CD4-positive, alpha-beta memory T cell (primary cell): ENCODE measurements at regions of chr7 and their contacts with region 1.

Region 1: DNA sequence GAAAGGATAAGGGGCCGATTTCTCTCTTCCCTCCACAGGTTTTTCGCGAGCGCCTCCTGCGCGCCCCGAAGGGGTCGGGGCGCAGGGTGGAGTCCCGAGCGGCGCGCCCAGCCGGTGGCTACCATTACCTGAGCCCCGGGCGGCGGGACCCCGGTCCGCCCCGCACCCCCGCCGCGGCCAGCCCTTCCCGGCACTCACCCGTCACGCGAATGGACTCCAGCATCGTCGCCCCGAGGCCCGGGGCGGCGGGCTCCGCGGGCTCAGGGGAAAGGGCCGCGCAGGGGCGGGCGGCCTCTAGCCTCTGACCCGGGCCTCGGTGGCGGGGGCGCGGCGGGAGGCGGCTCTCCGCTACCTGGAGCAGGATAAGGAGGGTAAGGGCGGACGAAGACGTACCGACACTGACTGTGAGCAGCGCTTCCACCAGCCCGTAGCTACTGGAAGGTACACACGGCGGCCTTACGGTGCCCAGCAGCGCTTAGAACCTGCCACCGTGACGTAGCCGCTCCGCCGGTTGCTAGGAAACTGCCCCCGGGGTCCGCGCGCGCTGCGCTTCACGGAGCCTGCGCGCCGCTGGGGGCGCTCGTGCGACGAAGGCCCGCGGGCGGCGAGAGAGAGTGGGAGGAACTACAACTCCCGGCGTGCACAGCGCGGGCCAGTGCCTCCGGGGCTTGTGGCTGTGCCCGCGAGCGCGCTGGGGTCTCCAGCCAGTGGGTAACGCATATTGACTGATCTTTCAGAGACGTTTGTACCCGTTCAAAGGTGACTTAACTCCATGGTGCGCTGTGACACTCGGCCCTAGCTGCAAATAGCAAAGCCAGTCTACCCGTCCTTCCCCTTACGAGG is 22.7 kb upstream of the ANLN start:
- DNase-seq: peak; percentile 90 to 93 (median 92)
- H3K4me3 ChIP-seq: peak overlapping the region; percentile 67 to 100
- H3K4me3 Mint-ChIP-seq: peak overlapping the region; percentile 92 to 95 (median 94)
- H3K27ac ChIP-seq: peak overlapping the region; percentile 73
- H3K27ac Mint-ChIP-seq: peak overlapping the region; percentile 77 to 96 (median 91)
- H3K4me1 ChIP-seq: peaks cover 11% of the 10 kb centered on the region
- H3K4me1 Mint-ChIP-seq: peaks cover 0 to 12% (median 5%) of the 10 kb centered on the region in 4 donors
- H3K27me3 ChIP-seq: peaks cover 6% of the 10 kb centered on the region
- H3K27me3 Mint-ChIP-seq: peaks cover 8 to 9% of the 10 kb centered on the region in 2 donors

Region 2: DNA sequence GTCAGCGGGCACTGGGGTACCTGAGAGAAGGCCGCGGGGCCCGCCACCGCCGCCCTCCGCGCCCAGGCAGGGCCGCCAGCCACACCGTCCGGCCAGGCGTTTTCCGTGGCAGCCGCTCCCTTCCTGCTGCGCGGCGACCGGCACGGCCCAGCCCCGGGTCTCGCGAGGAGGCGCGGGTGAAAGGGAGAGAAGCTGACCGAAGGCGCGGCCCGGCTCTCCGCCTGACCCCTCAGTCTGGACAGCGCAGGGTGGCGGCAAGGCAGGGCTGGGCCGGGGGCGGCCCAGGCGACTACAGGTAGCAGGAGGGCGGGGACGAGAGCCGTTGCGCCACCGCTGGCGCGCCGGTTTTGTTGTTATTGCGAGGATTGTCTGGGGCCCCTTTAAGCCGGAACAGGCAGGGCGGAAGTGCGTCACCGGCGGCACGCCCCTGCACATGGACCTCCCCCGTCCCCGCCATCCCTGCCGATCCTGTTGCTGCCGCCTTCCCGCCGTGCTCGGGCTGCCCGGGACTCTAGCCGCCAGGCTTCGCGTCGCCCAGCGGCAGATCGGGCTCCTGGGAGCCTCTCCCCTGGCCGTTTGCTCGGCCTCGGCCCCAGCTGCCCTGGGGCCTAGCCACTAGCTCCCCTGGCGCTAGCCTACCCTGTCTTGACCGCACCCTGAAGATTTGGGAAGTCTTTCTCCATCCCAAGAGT is 672.0 kb before region 1 on chr7 and contains the start of gene HERPUD2:
- CTCF ChIA-PET with region 1: interaction called, 3 read pairs
- POLR2A ChIA-PET with region 1: interaction called, 4 read pairs
- intact Hi-C with region 1: loop called (anchors 10 kb)
- DNase-seq: peak; percentile 91 to 94 (median 93)
- H3K4me3 ChIP-seq: peak within 1 kb of the TSS; percentile 90 to 98
- H3K4me3 Mint-ChIP-seq: peak within 1 kb of the TSS; percentile 94 to 99 (median 98)
- H3K27ac ChIP-seq: peak within 1 kb of the TSS; percentile 93
- H3K27ac Mint-ChIP-seq: peak within 1 kb of the TSS; percentile 86 to 100 (median 98)
- H3K4me1 ChIP-seq: peaks cover 33% of the 10 kb centered on the region
- H3K4me1 Mint-ChIP-seq: peaks cover 23 to 67% (median 39%) of the 10 kb centered on the region in 4 donors
- H3K27me3 ChIP-seq: no peaks in the 10 kb centered on the region
- H3K27me3 Mint-ChIP-seq: no peaks in the 10 kb centered on the region
- total RNA-seq, gene HERPUD2: 67.3 to 71.8 TPM

Region 3: GRCh38 chr7:35856175-35856574 is 510.8 kb before region 1 on chr7:
- CTCF ChIA-PET with region 1: no interaction called
- POLR2A ChIA-PET with region 1: no interaction called
- intact Hi-C with region 1: no loop called
- DNase-seq: no peak
- H3K4me3 ChIP-seq: no peak overlapping the region
- H3K4me3 Mint-ChIP-seq: peak overlapping the region in 1 of 8 donors; percentile 32
- H3K27ac ChIP-seq: no peak overlapping the region
- H3K27ac Mint-ChIP-seq: no peak overlapping the region
- H3K4me1 ChIP-seq: peaks cover 19% of the 10 kb centered on the region
- H3K4me1 Mint-ChIP-seq: peaks cover 45 to 81% (median 70%) of the 10 kb centered on the region in 4 donors
- H3K27me3 ChIP-seq: no peaks in the 10 kb centered on the region
- H3K27me3 Mint-ChIP-seq: no peaks in the 10 kb centered on the region

Region 4: DNA sequence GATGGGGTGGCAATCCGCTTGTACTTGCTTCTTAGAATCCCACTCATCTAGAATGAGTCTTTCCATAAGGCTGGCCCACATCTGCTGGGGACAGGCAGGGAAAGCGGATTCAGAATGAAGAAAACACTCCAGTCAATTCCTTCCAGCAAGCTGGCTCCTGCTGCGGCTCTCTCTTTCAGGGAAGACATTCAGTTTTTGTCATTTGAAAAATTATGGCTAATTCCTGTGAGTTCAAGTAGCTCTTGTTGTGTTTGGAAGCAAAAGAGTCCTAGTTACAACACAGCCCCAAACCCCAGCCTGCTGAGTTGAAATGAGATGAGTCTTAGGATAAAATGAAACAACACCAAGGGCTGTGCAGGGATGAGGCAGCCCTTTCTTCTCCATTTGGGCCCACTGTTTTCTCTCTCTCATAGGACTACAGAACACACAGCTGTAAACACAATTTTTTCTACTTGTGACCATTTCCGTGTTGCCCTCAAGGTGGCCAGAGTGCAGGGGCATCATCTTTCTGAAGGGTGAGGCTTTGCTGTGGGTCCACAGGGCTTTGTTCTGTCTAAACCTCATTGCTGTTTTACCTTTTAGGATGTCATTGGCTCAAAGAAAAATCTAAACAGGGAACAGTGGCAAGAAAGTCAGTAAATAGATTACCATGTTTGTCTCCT is 304.7 kb before region 1 on chr7:
- CTCF ChIA-PET with region 1: no interaction called
- POLR2A ChIA-PET with region 1: no interaction called
- intact Hi-C with region 1: no loop called
- DNase-seq: no peak
- H3K4me3 ChIP-seq: no peak overlapping the region
- H3K4me3 Mint-ChIP-seq: no peak overlapping the region
- H3K27ac ChIP-seq: no peak overlapping the region
- H3K27ac Mint-ChIP-seq: no peak overlapping the region
- H3K4me1 ChIP-seq: no peaks in the 10 kb centered on the region
- H3K4me1 Mint-ChIP-seq: no peaks in the 10 kb centered on the region
- H3K27me3 ChIP-seq: no peaks in the 10 kb centered on the region
- H3K27me3 Mint-ChIP-seq: peaks cover 0 to 2% of the 10 kb centered on the region in 2 donors

Region 5: GRCh38 chr7:36315309-36316133 is 51.4 kb before region 1 on chr7:
- CTCF ChIA-PET with region 1: interaction called, 10 read pairs
- POLR2A ChIA-PET with region 1: no interaction called
- intact Hi-C with region 1: no loop called
- DNase-seq: no peak
- H3K4me3 ChIP-seq: no peak overlapping the region
- H3K4me3 Mint-ChIP-seq: no peak overlapping the region
- H3K27ac ChIP-seq: no peak overlapping the region
- H3K27ac Mint-ChIP-seq: no peak overlapping the region
- H3K4me1 ChIP-seq: peaks cover 3% of the 10 kb centered on the region
- H3K4me1 Mint-ChIP-seq: peaks cover 2 to 6% (median 5%) of the 10 kb centered on the region in 4 donors
- H3K27me3 ChIP-seq: no peaks in the 10 kb centered on the region
- H3K27me3 Mint-ChIP-seq: no peaks in the 10 kb centered on the region

Region 6: DNA sequence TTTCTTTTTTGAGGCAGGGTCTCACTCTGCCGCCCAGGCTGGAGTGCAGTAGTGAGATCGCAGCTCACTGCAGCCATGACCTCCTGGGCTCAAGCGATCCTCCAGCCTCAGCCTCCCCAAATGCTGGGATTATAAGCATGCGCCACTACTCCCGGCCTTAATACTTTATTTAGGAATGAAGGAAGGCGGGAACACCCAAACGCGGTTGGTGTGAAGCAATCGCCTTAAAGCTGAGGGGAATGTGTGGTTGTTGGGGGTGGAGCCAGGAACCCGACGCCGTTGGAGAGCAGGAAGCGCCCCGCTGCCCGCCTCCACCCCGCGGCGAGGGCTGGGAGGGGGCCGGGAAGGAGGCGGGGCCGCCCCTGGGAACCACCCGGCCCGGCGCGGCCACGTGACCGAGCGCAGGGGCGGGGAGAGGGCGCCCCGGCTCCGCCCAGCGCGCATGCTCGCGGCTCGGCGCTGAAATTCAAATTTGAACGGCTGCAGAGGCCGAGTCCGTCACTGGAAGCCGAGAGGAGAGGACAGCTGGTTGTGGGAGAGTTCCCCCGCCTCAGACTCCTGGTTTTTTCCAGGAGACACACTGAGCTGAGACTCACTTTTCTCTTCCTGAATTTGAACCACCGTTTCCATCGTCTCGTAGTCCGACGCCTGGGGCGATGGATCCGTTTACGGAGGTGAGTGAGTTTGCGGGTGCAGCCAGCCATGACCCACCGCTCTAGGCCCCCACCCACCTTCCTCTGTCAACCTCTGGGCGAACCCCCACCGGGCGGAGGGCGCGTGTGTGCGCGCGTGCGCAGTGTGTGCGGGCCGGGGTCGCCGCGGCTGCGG is 22.6 kb after region 1 on chr7 and contains the start of gene ANLN:
- CTCF ChIA-PET with region 1: interaction called, 24 read pairs
- POLR2A ChIA-PET with region 1: interaction called, 19 read pairs
- intact Hi-C with region 1: loop called (anchors 1 kb)
- DNase-seq: peak; percentile 80 to 86 (median 85)
- H3K4me3 ChIP-seq: peak within 1 kb of the TSS; percentile 82 to 84
- H3K4me3 Mint-ChIP-seq: peak within 1 kb of the TSS; percentile 77 to 91 (median 86)
- H3K27ac ChIP-seq: peak within 1 kb of the TSS; percentile 50
- H3K27ac Mint-ChIP-seq: peak within 1 kb of the TSS; percentile 73 to 93 (median 85)
- H3K4me1 ChIP-seq: peaks cover 16% of the 10 kb centered on the region
- H3K4me1 Mint-ChIP-seq: peaks cover 15 to 28% (median 21%) of the 10 kb centered on the region in 4 donors
- H3K27me3 ChIP-seq: no peaks in the 10 kb centered on the region
- H3K27me3 Mint-ChIP-seq: peaks cover 0 to 1% of the 10 kb centered on the region in 2 donors
- total RNA-seq, gene ANLN: 0.23 TPM in 1 of 2 experiments, not detected in the other

Region 7: GRCh38 chr7:36487756-36488336 is 120.9 kb after region 1 on chr7:
- CTCF ChIA-PET with region 1: interaction called, 4 read pairs
- POLR2A ChIA-PET with region 1: no interaction called
- intact Hi-C with region 1: loop called (anchors 5 kb)
- DNase-seq: peak; percentile 43 to 61 (median 59)
- H3K4me3 ChIP-seq: no peak overlapping the region
- H3K4me3 Mint-ChIP-seq: no peak overlapping the region
- H3K27ac ChIP-seq: no peak overlapping the region
- H3K27ac Mint-ChIP-seq: no peak overlapping the region
- H3K4me1 ChIP-seq: no peaks in the 10 kb centered on the region
- H3K4me1 Mint-ChIP-seq: peaks cover 0 to 2% (median 0%) of the 10 kb centered on the region in 4 donors
- H3K27me3 ChIP-seq: no peaks in the 10 kb centered on the region
- H3K27me3 Mint-ChIP-seq: peaks cover 0 to 1% of the 10 kb centered on the region in 2 donors